ENCODE measurements at regions of chr16 and their contacts with region 1.

Region 1: DNA sequence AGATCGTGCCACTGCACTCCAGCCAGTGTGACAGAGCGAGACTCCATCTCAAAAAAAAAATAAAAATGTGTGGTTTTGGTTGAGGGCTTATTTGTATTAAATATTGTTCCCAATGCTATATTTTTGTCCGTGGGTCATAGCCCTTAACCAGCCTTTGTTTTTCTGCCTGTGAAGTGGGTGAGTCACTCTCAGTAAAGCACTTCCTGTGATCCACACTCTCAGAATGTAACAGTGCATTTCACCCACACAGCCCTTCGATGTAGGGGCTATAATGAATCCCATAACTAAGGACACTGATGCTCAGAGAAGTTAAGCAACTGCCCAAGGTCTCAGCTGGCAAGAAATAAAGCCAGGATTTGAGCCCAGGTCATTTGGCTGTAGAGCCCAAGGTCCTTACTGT is 34.7 kb upstream of the POLR3E start:
- DNase-seq: no peak
- H3K4me3 ChIP-seq: no peak overlapping the region
- H3K27ac ChIP-seq: no peak overlapping the region
- H3K4me1 ChIP-seq: no peaks in the 10 kb centered on the region
- H3K27me3 ChIP-seq: no peaks in the 10 kb centered on the region
- CTCF ChIP-seq: no peak

Region 2: GRCh38 chr16:22214889-22215288 is 47.6 kb before region 1 on chr16:
- CTCF ChIA-PET with region 1: no interaction called
- dilution Hi-C with region 1: loop called (anchors 5 kb)
- in situ Hi-C with region 1: no loop called
- intact Hi-C with region 1: no loop called
- DNase-seq: no peak
- H3K4me3 ChIP-seq: no peak overlapping the region
- H3K27ac ChIP-seq: no peak overlapping the region
- H3K4me1 ChIP-seq: no peaks in the 10 kb centered on the region
- H3K27me3 ChIP-seq: no peaks in the 10 kb centered on the region
- CTCF ChIP-seq: no peak

Measured in mammary epithelial cell (primary cell).